Ascending aorta (tissue), 2 donors: ENCODE measurements at regions of chr2 and their contacts with region 1.

Region 1: GRCh38 chr2:105858868-105859693 is 114.4 kb downstream of the NCK2 start:
- DNase-seq: no peak
- H3K4me3 ChIP-seq: no peak overlapping the region
- H3K27ac ChIP-seq: no peak overlapping the region
- H3K4me1 ChIP-seq: no peaks in the 10 kb centered on the region
- H3K27me3 ChIP-seq: no peaks in the 10 kb centered on the region
- CTCF ChIP-seq: no peak

Region 2: GRCh38 chr2:105822186-105822585 is 36.9 kb before region 1 on chr2:
- intact Hi-C with region 1: loop called (anchors 5 kb)
- DNase-seq: no peak
- H3K4me3 ChIP-seq: no peak overlapping the region
- H3K27ac ChIP-seq: no peak overlapping the region
- H3K4me1 ChIP-seq: peaks cover 0 to 8% of the 10 kb centered on the region in 2 donors
- H3K27me3 ChIP-seq: no peaks in the 10 kb centered on the region
- CTCF ChIP-seq: no peak